Sigmoid colon (tissue), 7 donors: ENCODE measurements at regions of chr2 and their contacts with region 1.

Region 1: GRCh38 chr2:71226965-71227560 is at the start of gene PAIP2B:
- DNase-seq: peak; percentile 100
- H3K4me3 ChIP-seq: peak within 1 kb of the TSS; percentile 77 to 97 (median 94)
- H3K27ac ChIP-seq: peak within 1 kb of the TSS; percentile 89 to 96 (median 94)
- H3K4me1 ChIP-seq: peaks cover 0 to 17% (median 6%) of the 10 kb centered on the region in 4 donors
- H3K27me3 ChIP-seq: no peaks in the 10 kb centered on the region
- CTCF ChIP-seq: no peak
- EP300 ChIP-seq: no peak
- POLR2A ChIP-seq: peak; percentile 66 to 83
- total RNA-seq, gene PAIP2B: 8.0 to 13.2 (median 12.4) TPM

Region 2: GRCh38 chr2:71130113-71130904 is 96.8 kb before region 1 on chr2 and contains the starts of genes MCEE and MPHOSPH10:
- intact Hi-C with region 1: loop called (anchors 5 kb)
- DNase-seq: peak; percentile 94
- H3K4me3 ChIP-seq: peak within 1 kb of the TSS; percentile 68 to 87 (median 80)
- H3K27ac ChIP-seq: peak within 1 kb of the TSS; percentile 88 to 95 (median 92)
- H3K4me1 ChIP-seq: peaks cover 0 to 37% (median 29%) of the 10 kb centered on the region in 4 donors
- H3K27me3 ChIP-seq: no peaks in the 10 kb centered on the region
- CTCF ChIP-seq: no peak
- EP300 ChIP-seq: no peak
- POLR2A ChIP-seq: peak; percentile 29 to 52
- total RNA-seq, gene MCEE: 8.1 to 23.5 (median 15.5) TPM
- total RNA-seq, gene MPHOSPH10: 21.0 to 27.1 (median 24.0) TPM

Region 3: GRCh38 chr2:71276311-71277146 is 49.5 kb after region 1 on chr2:
- intact Hi-C with region 1: loop called (anchors 1 kb)
- DNase-seq: peak; percentile 88
- H3K4me3 ChIP-seq: peak overlapping the region; percentile 38 to 61 (median 47)
- H3K27ac ChIP-seq: peak overlapping the region; percentile 60 to 78 (median 76)
- H3K4me1 ChIP-seq: peaks cover 0 to 22% (median 18%) of the 10 kb centered on the region in 4 donors
- H3K27me3 ChIP-seq: peaks cover 14 to 49% (median 31%) of the 10 kb centered on the region in 3 donors
- CTCF ChIP-seq: peak in 1 of 4 experiments; percentile 10
- EP300 ChIP-seq: no peak
- POLR2A ChIP-seq: no peak